Lower lobe of right lung (tissue), 2 donors: ENCODE measurements at regions of chr2 and their contacts with region 1.

Region 1: DNA sequence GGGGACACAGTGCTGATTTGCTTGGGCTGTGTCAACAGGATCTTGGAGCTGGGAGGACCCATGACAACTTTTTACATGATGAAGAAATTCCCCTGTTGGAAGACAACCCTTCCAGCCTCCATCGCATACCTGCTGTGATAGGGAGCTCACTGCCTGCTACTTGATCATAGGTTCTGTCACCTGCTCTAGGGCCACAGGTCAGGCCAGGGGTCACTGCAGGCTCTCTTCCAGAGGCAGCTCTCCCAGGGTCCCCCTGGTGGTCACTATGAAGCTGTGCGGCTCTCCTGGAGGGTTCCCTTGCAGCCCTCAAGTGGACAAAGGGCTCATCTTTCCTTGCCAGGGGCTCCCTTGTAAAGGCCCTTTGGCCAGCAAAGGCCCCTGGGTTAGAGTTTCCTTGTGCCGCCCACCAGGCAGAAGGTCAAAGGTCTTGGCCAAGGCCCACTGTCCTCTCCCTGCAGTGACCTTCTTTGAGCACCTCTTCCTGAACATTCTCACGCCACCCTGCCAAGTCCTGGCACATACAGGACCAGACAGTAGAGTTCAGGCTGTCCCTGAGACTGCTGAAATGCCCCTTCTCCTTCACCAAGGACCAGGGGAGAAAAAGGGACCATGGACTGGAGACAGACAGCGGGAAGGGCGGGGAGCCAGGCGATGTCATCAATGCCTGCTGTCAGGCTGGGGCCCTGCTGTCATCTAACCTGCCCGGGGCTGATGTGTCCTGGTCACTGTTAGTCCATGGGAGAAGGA is 345.1 kb downstream of the DYSF start:
- DNase-seq: no peak
- ATAC-seq: peak; percentile 68 to 69
- H3K4me3 ChIP-seq: no peak overlapping the region
- H3K27ac ChIP-seq: no peak overlapping the region
- H3K4me1 ChIP-seq: no peaks in the 10 kb centered on the region
- H3K27me3 ChIP-seq: no peaks in the 10 kb centered on the region
- CTCF ChIP-seq: peak; percentile 76

Region 2: GRCh38 chr2:71609958-71610357 is 188.5 kb before region 1 on chr2:
- intact Hi-C with region 1: loop called (anchors 5 kb)
- DNase-seq: no peak
- ATAC-seq: no peak
- H3K4me3 ChIP-seq: no peak overlapping the region
- H3K27ac ChIP-seq: no peak overlapping the region
- H3K4me1 ChIP-seq: peaks cover 21% of the 10 kb centered on the region
- H3K27me3 ChIP-seq: no peaks in the 10 kb centered on the region
- CTCF ChIP-seq: peak; percentile 44